Breast epithelium (tissue), 4 donors: ENCODE measurements at regions of chr9 and their contacts with region 1.

Region 1: GRCh38 chr9:88053856-88054501 is 79.6 kb upstream of the CDK20 start:
- DNase-seq: no peak
- H3K4me3 ChIP-seq: no peak overlapping the region
- H3K27ac ChIP-seq: no peak overlapping the region
- H3K4me1 ChIP-seq: no peaks in the 10 kb centered on the region
- H3K27me3 ChIP-seq: no peaks in the 10 kb centered on the region
- CTCF ChIP-seq: no peak
- POLR2A ChIP-seq: no peak

Region 2: GRCh38 chr9:87606841-87607521 is 447.0 kb before region 1 on chr9:
- intact Hi-C with region 1: no loop called
- DNase-seq: no peak
- H3K4me3 ChIP-seq: no peak overlapping the region
- H3K27ac ChIP-seq: no peak overlapping the region
- H3K4me1 ChIP-seq: no peaks in the 10 kb centered on the region
- H3K27me3 ChIP-seq: peaks cover 0 to 8% of the 10 kb centered on the region in 2 donors
- CTCF ChIP-seq: no peak
- POLR2A ChIP-seq: no peak

Region 3: DNA sequence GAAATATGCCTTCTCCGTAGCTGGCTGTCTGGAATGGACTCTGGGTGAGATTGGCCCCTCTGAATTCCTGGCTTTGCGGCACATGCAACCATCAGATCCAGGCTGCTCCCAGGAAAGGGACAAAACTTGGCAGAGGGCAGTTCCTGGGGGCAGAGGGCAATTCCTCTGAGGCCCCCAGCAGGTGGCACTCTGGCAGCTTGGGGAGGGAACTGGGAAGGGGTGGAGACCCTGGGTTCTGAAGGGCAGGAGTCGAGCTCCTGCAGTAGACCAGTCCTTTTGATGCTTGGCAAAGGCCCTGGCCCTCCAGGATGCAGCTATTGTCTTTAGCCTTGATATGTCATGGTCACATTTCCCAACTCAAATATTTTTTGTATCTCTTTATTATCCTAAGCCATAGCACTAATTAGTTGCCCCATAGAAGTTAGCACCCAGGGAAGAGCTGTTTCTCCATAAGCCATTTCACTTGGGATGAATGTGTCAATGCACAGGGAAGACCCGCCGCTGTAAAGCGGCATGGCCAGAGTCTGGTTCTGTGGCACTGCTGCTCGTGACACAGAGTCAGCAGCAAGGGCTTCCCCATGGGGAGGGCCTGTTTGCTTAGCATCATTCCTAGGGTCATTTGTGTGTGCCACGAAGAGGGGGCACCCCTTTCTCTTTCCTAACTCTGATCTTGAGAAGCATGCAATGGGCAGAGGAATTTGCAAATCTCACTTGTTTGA is 28.4 kb before region 1 on chr9:
- intact Hi-C with region 1: loop called (anchors 1 kb)
- DNase-seq: no peak
- H3K4me3 ChIP-seq: no peak overlapping the region
- H3K27ac ChIP-seq: no peak overlapping the region
- H3K4me1 ChIP-seq: no peaks in the 10 kb centered on the region
- H3K27me3 ChIP-seq: no peaks in the 10 kb centered on the region
- CTCF ChIP-seq: no peak
- POLR2A ChIP-seq: no peak

Region 4: DNA sequence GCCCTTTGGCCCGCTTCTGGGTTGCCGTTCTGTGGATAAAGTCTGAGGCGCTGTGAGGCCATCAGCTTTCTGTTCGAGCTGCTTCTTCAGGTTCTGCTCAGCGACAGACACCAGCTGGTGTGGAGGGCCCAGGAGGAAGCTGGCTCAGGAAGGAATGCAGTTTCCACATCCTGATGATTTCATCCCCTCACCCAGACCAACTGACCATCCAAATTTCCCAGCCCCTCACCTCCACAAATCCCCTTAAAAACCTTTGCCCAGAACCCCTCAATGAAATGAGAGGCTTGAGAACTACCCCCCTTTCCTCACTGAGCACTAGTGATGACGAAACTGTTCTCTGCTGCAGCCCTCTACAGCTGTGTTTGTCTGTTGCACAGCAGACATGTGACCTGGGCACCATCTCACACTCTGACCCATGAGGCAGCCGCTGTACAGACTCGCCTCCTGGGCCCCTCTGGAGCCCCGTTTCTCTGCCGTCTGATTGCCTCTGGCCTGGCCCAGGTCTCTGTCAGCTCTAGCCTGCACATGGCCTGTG is 38.9 kb after region 1 on chr9:
- intact Hi-C with region 1: loop called (anchors 2 kb)
- DNase-seq: no peak
- H3K4me3 ChIP-seq: no peak overlapping the region
- H3K27ac ChIP-seq: no peak overlapping the region
- H3K4me1 ChIP-seq: no peaks in the 10 kb centered on the region
- H3K27me3 ChIP-seq: no peaks in the 10 kb centered on the region
- CTCF ChIP-seq: no peak
- POLR2A ChIP-seq: no peak